AG04449 (cell line): ENCODE measurements at regions of chr13 and their contacts with region 1.

Region 1: DNA sequence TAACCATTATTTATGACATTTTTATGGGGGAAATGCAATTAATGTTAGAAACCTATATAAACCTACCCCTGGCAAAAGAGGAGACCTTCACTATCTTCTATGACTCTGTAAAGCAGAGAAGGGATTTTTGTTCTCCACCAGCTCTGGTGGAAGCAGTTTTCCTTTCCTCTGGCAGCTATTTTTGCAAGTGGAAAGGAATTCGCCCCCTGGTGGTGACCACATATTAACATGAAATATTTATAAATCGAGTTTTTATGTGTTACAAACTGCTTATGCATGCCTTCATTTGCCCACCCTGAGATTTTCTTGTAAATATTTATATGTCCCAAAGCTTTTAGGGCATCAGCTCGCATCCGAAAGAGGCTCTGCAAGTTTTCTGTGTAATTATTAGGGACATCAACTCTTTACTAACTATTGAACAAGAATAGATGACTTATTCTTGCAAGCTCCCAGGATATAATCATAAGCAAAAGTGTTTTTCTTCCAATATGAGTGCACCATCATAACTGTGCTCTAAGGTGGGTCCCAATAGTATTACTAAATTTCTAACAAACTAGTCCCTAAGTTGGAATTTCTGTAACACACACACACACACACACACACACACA is 62.4 kb downstream of the SERTM1 start:
- DNase-seq: peak; percentile 14
- H3K4me3 ChIP-seq: no peak overlapping the region
- CTCF ChIP-seq: peak; percentile 42

Region 2: GRCh38 chr13:36261976-36262375 is 474.2 kb before region 1 on chr13:
- CTCF ChIA-PET with region 1: no interaction called
- POLR2A ChIA-PET with region 1: no interaction called
- DNase-seq: no peak
- H3K4me3 ChIP-seq: no peak overlapping the region
- CTCF ChIP-seq: no peak

Region 3: GRCh38 chr13:36282818-36283445 is 453.3 kb before region 1 on chr13:
- CTCF ChIA-PET with region 1: interaction called, 57 read pairs
- POLR2A ChIA-PET with region 1: no interaction called
- DNase-seq: no peak
- H3K4me3 ChIP-seq: no peak overlapping the region
- CTCF ChIP-seq: peak; percentile 55

Region 4: DNA sequence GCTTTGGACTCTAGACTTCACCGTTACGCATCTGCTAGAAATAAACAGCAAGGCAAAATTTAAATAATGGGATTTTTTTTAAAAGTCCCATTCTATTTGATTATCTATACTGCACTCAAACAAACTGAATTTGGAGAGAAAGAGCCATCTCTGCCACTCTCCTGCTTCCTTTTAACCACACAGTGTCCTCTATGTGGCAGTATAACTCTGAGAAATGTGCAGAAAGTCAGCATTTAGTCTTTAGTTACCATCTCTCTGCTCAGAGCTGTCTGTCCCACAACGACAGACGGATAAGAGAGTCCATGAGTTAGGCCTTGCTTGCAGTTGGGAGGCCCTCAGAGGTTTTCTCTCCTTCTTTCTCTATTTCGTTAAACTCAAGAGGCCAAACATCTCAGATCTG is 282.7 kb before region 1 on chr13:
- CTCF ChIA-PET with region 1: interaction called, 97 read pairs
- POLR2A ChIA-PET with region 1: no interaction called
- DNase-seq: no peak
- H3K4me3 ChIP-seq: no peak overlapping the region
- CTCF ChIP-seq: peak; percentile 24

Region 5: GRCh38 chr13:36712770-36713169 is 23.5 kb before region 1 on chr13:
- CTCF ChIA-PET with region 1: interaction called, 20 read pairs
- POLR2A ChIA-PET with region 1: no interaction called
- DNase-seq: no peak
- H3K4me3 ChIP-seq: no peak overlapping the region
- CTCF ChIP-seq: no peak

Region 6: GRCh38 chr13:36724141-36724540 is 12.1 kb before region 1 on chr13:
- CTCF ChIA-PET with region 1: interaction called, 57 read pairs
- POLR2A ChIA-PET with region 1: no interaction called
- DNase-seq: no peak
- H3K4me3 ChIP-seq: no peak overlapping the region
- CTCF ChIP-seq: no peak